GM13976 (cell line): ENCODE measurements at regions of chr13 and their contacts with region 1.

Region 1: DNA sequence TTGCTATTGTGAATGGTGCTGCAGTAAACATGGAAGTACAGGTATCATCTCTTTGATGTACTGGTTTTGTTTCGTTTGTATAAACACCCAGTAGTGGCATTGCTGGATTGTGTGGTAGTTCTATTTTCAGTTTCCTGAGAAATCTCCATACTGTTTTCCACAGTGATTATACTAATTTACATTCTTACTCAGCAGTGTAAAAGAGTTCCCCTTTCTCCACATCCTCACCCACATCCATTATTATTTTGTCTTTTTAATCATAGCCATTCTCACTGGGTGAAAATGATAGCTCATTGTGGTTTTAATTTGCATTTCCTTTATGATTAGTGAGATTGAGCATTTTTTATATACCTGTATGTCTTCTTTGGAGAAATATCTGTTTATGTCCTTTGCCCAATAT is 62.3 kb upstream of the PARP4 start:
- DNase-seq: no peak
- CTCF ChIP-seq: no peak

Region 2: DNA sequence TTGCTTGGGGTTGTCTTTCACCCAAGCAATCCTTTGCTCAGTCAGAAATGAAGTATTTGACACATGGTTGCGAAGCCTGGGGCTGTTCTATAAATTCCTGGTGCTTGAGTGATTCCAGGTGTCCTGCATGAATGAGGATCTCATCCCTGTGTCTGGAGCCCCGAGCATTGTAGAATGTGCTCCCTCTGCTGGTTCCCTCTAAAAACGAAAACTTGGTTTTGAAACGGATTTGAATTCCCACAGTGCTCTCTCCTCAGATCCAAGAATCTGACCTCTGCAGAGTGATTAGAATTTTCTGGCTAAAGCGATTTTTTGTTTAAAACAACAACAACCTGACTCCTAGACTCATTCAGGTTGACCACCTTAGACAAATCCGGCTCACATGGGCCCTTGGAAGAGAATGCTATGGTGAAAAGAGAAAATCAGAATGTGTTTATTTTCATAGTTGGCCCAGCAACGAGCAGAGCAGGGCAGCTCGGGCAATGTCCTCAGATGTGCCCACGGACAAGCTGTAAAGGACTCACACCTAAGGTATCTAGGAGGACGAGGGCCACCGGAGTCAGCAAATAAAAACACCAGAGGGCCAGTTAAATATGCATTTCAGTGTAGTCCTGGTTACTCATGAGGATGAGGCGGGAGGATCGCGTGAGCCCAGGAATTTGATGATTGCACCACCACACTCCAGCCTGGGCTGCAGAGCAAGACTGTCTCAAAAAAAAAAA is 96.7 kb after region 1 on chr13:
- in situ Hi-C with region 1: loop called (anchors 10 kb)
- DNase-seq: peak; percentile 58
- CTCF ChIP-seq: peak; percentile 61